Activated CD4-positive, alpha-beta memory T cell treated with anti-CD3 and anti-CD28 coated beads, Interleukin-2, amount 10 ng/mL, durations not matched to agents 7 days and 5 days (primary cell): ENCODE measurements at regions of chr4 and their contacts with region 1.

Region 1: DNA sequence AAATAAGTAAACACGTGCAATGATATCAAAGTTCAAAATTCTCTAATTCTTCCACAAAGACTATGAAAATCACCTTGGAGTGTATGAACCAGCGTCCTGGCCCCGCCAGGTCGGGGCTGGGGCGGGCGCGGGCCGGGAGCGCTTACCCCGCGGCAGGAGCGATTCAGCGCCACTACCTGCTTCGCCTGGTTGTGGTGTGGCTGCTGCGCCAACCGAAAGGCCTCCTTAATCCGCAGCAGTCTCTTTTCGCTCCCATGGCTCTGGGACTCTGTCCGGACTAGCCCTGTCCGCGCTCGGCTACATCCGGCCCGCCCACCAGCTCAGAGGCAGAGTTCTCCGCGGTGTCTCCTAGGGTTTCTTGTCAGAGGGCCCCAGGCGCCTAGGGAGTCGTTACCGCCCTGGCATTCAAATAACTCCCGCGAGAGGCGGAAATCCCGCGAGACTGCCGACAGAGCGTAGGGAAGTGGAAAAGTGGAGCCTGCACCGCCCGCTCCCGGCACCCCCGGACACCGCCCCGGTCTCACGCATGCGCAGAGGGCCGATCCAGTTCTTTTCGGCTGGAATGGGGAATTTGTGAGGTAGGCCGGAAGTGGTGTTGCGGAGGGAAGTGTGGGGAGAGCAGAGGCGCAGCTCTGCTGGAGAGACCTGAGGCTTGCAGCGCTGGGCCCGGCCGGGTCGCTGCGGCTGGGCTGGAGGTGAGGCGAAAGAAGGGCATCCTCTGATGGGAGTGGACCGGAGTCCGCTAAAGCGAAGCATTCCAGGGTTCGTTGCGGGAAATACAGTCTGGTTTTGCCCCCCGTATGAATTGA is at the start of gene FAM200B:
- DNase-seq: peak; percentile 98
- H3K4me3 Mint-ChIP-seq: peak within 1 kb of the TSS; percentile 97
- H3K27ac Mint-ChIP-seq: peak within 1 kb of the TSS; percentile 92
- H3K4me1 Mint-ChIP-seq: peaks cover 46% of the 10 kb centered on the region
- H3K27me3 Mint-ChIP-seq: no peaks in the 10 kb centered on the region
- total RNA-seq, gene FAM200B: 15.8 to 16.0 TPM

Region 2: DNA sequence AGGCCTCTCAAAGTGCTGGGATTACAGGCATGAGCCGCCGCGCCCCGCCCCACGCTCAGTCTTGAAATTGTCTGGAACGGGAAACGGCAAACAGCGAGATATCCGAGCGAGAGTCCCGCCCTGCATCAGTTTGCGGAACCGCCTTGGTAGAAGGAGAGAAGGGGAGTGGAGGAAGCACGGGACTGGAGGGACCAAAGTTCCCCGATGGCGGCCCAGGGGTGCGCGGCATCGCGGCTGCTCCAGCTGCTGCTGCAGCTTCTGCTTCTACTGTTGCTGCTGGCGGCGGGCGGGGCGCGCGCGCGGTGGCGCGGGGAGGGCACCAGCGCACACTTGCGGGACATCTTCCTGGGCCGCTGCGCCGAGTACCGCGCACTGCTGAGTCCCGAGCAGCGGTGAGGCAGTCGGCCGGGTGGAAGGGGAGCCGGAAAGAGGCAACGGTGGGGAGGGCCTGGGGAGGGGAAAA is 21.6 kb after region 1 on chr4 and contains the start of gene BST1:
- CTCF ChIA-PET with region 1: no interaction called
- POLR2A ChIA-PET with region 1: interaction called, 18 read pairs
- DNase-seq: peak; percentile 57
- H3K4me3 Mint-ChIP-seq: peak within 1 kb of the TSS; percentile 80
- H3K27ac Mint-ChIP-seq: no peak within 1 kb of the TSS
- H3K4me1 Mint-ChIP-seq: peaks cover 13% of the 10 kb centered on the region
- H3K27me3 Mint-ChIP-seq: peaks cover 36% of the 10 kb centered on the region
- total RNA-seq, gene BST1: 0.40 to 0.95 TPM